AG04449 (cell line): ENCODE measurements at regions of chr3 and their contacts with region 1.

Region 1: DNA sequence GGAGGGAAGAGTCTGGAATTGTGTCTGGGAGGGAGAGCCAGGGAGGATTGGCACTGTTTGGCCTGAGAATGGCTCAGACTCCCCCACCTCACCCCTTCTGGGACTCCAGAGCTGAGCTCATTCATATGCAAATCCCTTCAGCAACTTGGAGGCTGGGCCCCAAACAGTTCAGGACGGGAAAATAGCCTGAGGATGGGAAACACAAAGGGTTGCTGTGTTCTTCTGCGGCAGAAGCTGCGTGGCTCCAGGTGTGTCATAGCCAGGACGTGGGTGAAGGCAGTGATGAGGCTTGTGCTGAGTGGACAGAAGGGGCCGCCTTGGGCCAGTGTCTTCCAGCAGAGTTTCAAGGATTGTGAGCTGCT is 16.6 kb downstream of the MASP1 start:
- DNase-seq: no peak
- H3K4me3 ChIP-seq: no peak overlapping the region
- CTCF ChIP-seq: no peak

Region 2: GRCh38 chr3:187264021-187264420 is 10.9 kb before region 1 on chr3:
- CTCF ChIA-PET with region 1: interaction called, 16 read pairs
- POLR2A ChIA-PET with region 1: no interaction called
- DNase-seq: peak; percentile 56
- H3K4me3 ChIP-seq: no peak overlapping the region
- CTCF ChIP-seq: no peak